ENCODE measurements at regions of chr19 and their contacts with region 1.

Region 1: DNA sequence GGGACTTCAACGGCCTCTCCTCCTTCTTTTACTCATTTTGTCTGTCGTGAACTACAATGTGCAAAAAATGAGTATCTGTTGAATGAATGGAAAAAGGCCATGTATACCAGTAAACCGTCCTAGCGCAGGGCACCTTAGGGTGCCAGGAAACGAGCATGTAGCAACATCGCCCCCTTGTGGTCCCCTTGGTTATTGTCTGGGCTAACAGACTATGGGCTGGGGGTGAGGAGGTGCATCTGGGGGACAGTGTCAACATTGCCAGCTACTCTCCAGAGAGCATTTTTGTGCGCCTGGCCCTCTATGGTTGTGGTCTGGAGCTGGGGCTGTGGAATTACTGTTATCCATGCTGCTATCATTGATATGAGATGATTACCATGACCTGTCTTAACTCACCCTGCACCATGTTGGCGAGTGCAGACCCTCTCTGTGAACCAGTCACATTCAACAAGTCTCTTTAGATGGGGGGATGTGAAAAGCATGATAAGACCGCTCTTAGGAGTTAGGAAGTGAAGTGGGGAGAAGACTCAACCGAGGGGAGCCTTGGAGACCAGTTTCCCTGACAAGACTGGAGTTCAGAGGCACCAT is 22.8 kb upstream of the SIGLEC11 start:
- DNase-seq: peak in 4 of 5 donors; percentile 28 to 56 (median 49)
- ATAC-seq: peak in 3 of 4 donors; percentile 48 to 50 (median 49)
- H3K4me3 ChIP-seq: no peak overlapping the region
- H3K27ac ChIP-seq: no peak overlapping the region
- H3K4me1 ChIP-seq: peaks cover 0 to 7% (median 0%) of the 10 kb centered on the region in 12 donors
- H3K27me3 ChIP-seq: no peaks in the 10 kb centered on the region
- CTCF ChIP-seq: peak; percentile 66 to 86 (median 78)
- POLR2A ChIP-seq: no peak

Region 2: GRCh38 chr19:49799621-49800376 is 183.9 kb before region 1 on chr19:
- intact Hi-C with region 1: no loop called
- DNase-seq: no peak
- ATAC-seq: no peak
- H3K4me3 ChIP-seq: no peak overlapping the region
- H3K27ac ChIP-seq: no peak overlapping the region
- H3K4me1 ChIP-seq: peaks cover 0 to 14% (median 1%) of the 10 kb centered on the region in 12 donors
- H3K27me3 ChIP-seq: no peaks in the 10 kb centered on the region
- CTCF ChIP-seq: peak in 2 of 12 donors; percentile 7 to 8
- POLR2A ChIP-seq: no peak

Region 3: DNA sequence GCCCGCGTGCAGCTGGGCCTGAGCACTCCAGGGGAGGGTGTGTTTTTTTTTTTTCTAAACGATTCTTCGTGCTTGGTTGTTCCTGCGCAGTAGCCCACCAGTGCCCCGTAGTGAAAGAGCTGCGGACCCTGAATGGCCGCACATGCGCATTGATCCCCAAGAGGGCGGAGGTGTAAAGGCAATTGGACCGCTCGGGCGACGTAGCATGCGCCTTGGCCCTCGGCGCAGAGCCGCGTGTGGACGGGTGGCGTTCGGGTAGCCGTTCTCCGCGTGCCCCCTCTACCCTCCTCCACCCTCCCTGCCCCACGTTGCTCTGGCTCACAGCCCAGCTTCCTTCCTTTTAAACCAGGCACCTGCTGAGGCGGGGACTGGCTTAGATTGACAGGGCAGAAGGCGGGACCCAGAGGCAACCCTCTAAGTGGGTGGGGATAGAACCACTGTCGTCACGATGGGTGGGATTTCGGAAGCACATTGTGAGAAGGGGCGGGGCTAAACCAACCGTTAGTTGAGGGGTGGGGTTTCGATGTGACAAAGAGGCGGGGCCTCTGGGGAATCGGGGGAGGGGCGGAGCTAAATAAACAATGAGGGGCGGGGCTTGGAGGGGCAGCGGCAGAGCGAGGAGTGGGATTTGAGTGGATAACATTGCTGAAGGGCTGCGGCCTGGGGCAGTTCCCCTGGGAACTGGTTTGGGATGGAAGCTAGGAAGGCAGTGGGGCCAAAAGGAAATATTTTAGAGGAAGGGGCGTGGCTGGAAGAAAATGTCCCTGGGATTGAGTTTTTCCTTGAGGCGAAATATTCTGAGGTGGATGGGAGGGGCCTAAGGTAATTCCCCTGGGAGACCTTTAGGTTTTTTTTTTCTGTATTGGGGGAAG is 53.9 kb before region 1 on chr19:
- intact Hi-C with region 1: loop called in 3 of 10 experiments (anchors 2 to 5 kb)
- DNase-seq: peak; percentile 94 to 97 (median 95)
- ATAC-seq: peak; percentile 91 to 96 (median 92)
- H3K4me3 ChIP-seq: peak overlapping the region; percentile 54 to 99 (median 87)
- H3K27ac ChIP-seq: peak overlapping the region; percentile 87 to 98 (median 94)
- H3K4me1 ChIP-seq: peaks cover 0 to 38% (median 23%) of the 10 kb centered on the region in 12 donors
- H3K27me3 ChIP-seq: no peaks in the 10 kb centered on the region
- CTCF ChIP-seq: peak in 3 of 12 donors; percentile 5 to 15 (median 5)
- POLR2A ChIP-seq: no peak

Region 4: DNA sequence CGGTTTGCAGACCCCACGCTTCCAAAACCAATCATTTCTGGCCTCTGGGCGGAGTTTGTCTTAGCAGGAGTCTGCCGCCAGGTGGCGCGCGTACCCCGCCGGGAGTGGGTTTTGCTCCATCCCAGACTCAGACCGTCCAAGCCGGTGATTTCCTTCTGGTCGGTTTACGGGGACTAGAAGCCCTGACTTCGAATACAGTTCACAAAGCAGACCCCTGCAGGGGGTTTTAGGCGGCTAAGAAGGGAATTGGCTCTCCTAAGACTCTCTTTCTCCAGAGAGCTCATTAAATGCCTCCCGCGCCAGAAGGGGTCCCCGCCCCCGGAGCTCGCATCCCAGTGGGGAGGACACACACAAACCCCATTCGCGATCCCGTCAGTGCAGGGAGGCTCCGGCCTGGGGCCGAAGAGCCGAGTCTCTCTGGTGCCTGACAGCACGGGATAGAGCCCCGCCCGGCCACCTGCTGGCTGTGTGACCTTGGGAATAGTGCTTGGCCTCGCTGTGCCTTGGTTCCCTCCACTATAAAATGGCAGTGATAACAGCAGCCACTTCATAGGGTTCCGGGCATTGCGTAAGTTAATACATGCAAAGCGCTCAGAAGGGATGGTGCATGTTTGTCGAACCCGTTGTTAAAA is 45.9 kb before region 1 on chr19:
- intact Hi-C with region 1: loop called (anchors 1 to 5 kb)
- DNase-seq: peak; percentile 72 to 91 (median 74)
- ATAC-seq: peak; percentile 73 to 90 (median 88)
- H3K4me3 ChIP-seq: peak overlapping the region in 8 of 12 donors; percentile 8 to 38 (median 29)
- H3K27ac ChIP-seq: no peak overlapping the region
- H3K4me1 ChIP-seq: peaks cover 0 to 10% (median 4%) of the 10 kb centered on the region in 12 donors
- H3K27me3 ChIP-seq: peaks cover 0 to 7% (median 0%) of the 10 kb centered on the region in 9 donors
- CTCF ChIP-seq: peak; percentile 90 to 99 (median 97)
- POLR2A ChIP-seq: no peak

Region 5: GRCh38 chr19:49954079-49954829 is 29.5 kb before region 1 on chr19:
- intact Hi-C with region 1: loop called in 1 of 10 experiments (anchors 5 kb)
- DNase-seq: no peak
- ATAC-seq: peak in 3 of 4 donors; percentile 54 to 56 (median 55)
- H3K4me3 ChIP-seq: no peak overlapping the region
- H3K27ac ChIP-seq: peak overlapping the region in 2 of 12 donors; percentile 26 to 46
- H3K4me1 ChIP-seq: peaks cover 0 to 44% (median 5%) of the 10 kb centered on the region in 12 donors
- H3K27me3 ChIP-seq: peaks cover 0 to 11% (median 0%) of the 10 kb centered on the region in 9 donors
- CTCF ChIP-seq: no peak
- POLR2A ChIP-seq: no peak

Region 6: GRCh38 chr19:50025024-50025789 is 41.5 kb after region 1 on chr19 and contains the start of gene VRK3:
- intact Hi-C with region 1: no loop called
- DNase-seq: peak; percentile 99 to 100 (median 99)
- ATAC-seq: peak; percentile 96 to 99 (median 98)
- H3K4me3 ChIP-seq: peak within 1 kb of the TSS; percentile 73 to 100 (median 94)
- H3K27ac ChIP-seq: peak within 1 kb of the TSS; percentile 69 to 97 (median 93)
- H3K4me1 ChIP-seq: peaks cover 0 to 38% (median 24%) of the 10 kb centered on the region in 12 donors
- H3K27me3 ChIP-seq: no peaks in the 10 kb centered on the region
- CTCF ChIP-seq: peak in 2 of 12 donors; percentile 6 to 18
- POLR2A ChIP-seq: peak in 1 of 2 donors; percentile 73
- total RNA-seq, gene VRK3: 17.8 to 33.7 (median 23.1) TPM

Measured in heart left ventricle (tissue), 16 donors.